GM12878 (cell line): ENCODE measurements at regions of chr3 and their contacts with region 1.

Region 1: GRCh38 chr3:28268989-28269388 is 27.6 kb downstream of the CMC1 start:
- DNase-seq: no peak
- ATAC-seq: peak; percentile 50; the same call in 2 of the 3 replicates
- H3K4me3 ChIP-seq: no peak overlapping the region
- H3K27ac ChIP-seq: no peak overlapping the region
- H3K4me1 ChIP-seq: no peaks in the 10 kb centered on the region
- H3K27me3 ChIP-seq: no peaks in the 10 kb centered on the region
- CTCF ChIP-seq: peak in 1 of 3 experiments; percentile 26; a peak in 1 of 6 replicates
- EP300 ChIP-seq: no peak
- POLR2A ChIP-seq: no peak
- RAD21 ChIP-seq: no peak

Region 2: GRCh38 chr3:28252001-28252431 is 17.0 kb before region 1 on chr3:
- CTCF ChIA-PET with region 1: interaction called, 5 read pairs
- POLR2A ChIA-PET with region 1: no interaction called
- RAD21 ChIA-PET with region 1: interaction called, 5 read pairs
- SMC1A ChIA-PET with region 1: interaction called, 15 read pairs
- in situ Hi-C with region 1: no loop called
- intact Hi-C with region 1: no loop called
- DNase-seq: no peak
- ATAC-seq: peak; percentile 86
- H3K4me3 ChIP-seq: no peak overlapping the region
- H3K27ac ChIP-seq: no peak overlapping the region
- H3K4me1 ChIP-seq: no peaks in the 10 kb centered on the region; the same call in 1 of the 2 replicates
- H3K27me3 ChIP-seq: no peaks in the 10 kb centered on the region
- CTCF ChIP-seq: no peak
- EP300 ChIP-seq: peak in 1 of 2 experiments; percentile 46; a peak in 2 of 4 replicates
- POLR2A ChIP-seq: no peak
- RAD21 ChIP-seq: no peak

Region 3: GRCh38 chr3:28279770-28280169 is 10.8 kb after region 1 on chr3:
- CTCF ChIA-PET with region 1: interaction called, 7 read pairs
- POLR2A ChIA-PET with region 1: no interaction called
- RAD21 ChIA-PET with region 1: no interaction called
- SMC1A ChIA-PET with region 1: interaction called, 15 read pairs
- in situ Hi-C with region 1: no loop called
- intact Hi-C with region 1: no loop called
- DNase-seq: no peak
- ATAC-seq: no peak
- H3K4me3 ChIP-seq: no peak overlapping the region
- H3K27ac ChIP-seq: no peak overlapping the region
- H3K4me1 ChIP-seq: no peaks in the 10 kb centered on the region
- H3K27me3 ChIP-seq: no peaks in the 10 kb centered on the region
- CTCF ChIP-seq: no peak
- EP300 ChIP-seq: no peak
- POLR2A ChIP-seq: no peak
- RAD21 ChIP-seq: no peak